GM10248 (cell line): ENCODE measurements at regions of chr17 and their contacts with region 1.

Region 1: GRCh38 chr17:67509390-67510289 is 132.6 kb downstream of the PITPNC1 start:
- DNase-seq: peak; percentile 30
- CTCF ChIP-seq: no peak

Region 2: DNA sequence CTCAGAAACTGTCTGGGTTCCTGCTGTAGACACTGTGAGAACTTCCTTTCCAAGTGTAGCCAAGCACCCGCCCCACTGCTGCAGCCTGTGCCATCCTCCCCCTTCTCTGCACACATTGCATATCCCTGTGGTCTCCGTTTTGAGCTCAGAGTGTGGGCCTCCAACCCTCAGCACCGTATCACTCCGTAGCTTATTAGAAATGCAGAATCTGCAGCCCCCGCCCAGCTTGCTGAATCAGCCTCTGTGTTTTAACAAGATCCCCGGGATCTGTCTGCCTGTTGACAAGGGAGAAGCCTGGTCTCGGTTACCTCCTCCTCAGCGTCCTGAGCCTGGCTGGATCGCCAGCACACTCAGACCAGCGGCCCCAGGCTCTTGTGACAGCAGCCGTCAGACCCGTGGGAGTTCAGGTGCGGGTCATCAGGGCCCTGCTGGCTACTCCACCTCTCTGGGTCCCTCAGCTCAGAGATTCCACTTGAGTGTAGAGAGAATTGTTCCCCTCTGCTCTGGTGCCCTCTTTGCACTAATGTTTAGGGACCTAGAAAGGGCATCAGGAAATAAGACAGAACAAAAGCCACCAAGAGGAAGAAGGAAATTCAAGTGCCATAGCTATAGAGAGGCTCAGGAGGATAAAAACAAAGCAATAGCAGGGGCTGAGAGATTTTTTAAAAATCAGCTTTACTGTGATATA is 40.3 kb before region 1 on chr17:
- CTCF ChIA-PET with region 1: no interaction called
- POLR2A ChIA-PET with region 1: no interaction called
- DNase-seq: no peak
- CTCF ChIP-seq: no peak

Region 3: DNA sequence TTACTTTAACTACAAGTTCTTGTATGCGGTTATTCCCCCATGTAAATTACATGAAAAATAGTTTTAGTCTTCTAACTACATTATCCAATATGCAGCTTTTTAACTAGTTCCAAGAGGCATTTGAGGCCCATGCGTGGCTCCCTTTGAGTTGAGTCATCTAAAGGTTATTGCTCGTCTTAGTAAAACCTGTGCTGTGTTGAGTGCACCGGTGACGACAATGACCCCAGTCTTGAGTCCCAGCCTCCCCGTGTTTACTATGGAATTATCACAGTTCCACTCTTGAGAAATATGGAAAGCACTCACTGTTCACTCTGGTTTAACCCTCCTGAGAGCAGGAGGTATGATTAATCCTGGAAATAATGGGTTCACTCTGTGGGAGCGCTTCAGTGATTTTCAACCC is 13.4 kb before region 1 on chr17:
- CTCF ChIA-PET with region 1: interaction called, 13 read pairs
- POLR2A ChIA-PET with region 1: no interaction called
- DNase-seq: no peak
- CTCF ChIP-seq: no peak